Activated CD4-positive, alpha-beta memory T cell treated with anti-CD3 and anti-CD28 coated beads, Interleukin-2, amount 10 ng/mL, durations not matched to agents 7 days and 5 days (primary cell): ENCODE measurements at regions of chr5 and their contacts with region 1.

Region 1: DNA sequence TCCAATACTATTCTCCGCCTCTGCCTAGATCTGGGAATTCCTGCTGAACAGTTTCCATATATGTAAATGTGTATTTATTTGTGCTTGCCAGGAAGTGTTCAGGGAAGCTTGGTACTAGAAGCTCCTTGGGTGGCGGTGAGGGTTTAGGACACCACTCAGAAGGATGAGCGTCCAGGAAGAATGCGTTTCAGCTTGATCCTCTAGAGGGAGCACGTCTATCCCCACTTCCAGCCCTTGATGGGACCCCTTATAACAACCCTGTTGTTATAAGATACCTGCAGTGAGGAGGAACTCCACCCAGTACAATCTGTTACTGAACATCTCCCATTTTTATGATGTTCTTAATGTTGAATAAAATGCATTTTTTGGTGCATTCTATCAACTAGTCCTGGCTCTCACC is 88.9 kb downstream of the CYFIP2 start:
- DNase-seq: no peak
- H3K4me3 Mint-ChIP-seq: no peak overlapping the region
- H3K27ac Mint-ChIP-seq: no peak overlapping the region
- H3K4me1 Mint-ChIP-seq: peaks cover 26% of the 10 kb centered on the region
- H3K27me3 Mint-ChIP-seq: no peaks in the 10 kb centered on the region

Region 2: DNA sequence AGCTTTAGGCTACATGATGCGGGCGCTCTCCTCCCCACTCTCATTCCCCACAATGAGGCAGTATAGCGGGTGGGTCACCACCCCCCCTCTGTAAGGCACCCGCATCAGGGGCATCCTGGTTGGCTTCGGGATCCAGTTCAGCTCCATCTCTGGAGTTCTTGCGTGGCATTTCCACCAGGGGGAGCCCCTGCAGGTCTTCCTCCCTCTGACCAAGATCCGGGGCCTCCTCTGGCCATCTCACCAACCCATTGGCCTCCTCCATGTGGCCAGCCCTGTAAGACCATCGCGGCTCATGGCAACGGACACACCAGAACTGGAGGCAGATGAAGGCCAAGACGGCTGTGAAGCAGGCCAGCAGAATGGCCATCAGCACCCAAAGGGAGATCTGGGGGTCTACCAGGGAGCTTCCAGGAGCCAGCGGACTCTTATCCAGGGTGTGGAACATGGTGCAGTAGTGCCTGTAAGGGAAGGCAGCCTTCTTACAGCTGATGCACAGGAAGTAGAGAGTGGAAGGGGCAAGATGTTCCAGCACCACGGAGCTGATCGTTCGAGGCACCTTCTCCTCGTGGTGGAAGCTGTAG is 11.9 kb before region 1 on chr5:
- CTCF ChIA-PET with region 1: interaction called, 12 read pairs
- POLR2A ChIA-PET with region 1: interaction called, 3 read pairs
- DNase-seq: peak; percentile 34
- H3K4me3 Mint-ChIP-seq: no peak overlapping the region
- H3K27ac Mint-ChIP-seq: no peak overlapping the region
- H3K4me1 Mint-ChIP-seq: peaks cover 30% of the 10 kb centered on the region
- H3K27me3 Mint-ChIP-seq: no peaks in the 10 kb centered on the region

Region 3: GRCh38 chr5:157415838-157416237 is 61.0 kb after region 1 on chr5:
- CTCF ChIA-PET with region 1: no interaction called
- POLR2A ChIA-PET with region 1: no interaction called
- DNase-seq: no peak
- H3K4me3 Mint-ChIP-seq: no peak overlapping the region
- H3K27ac Mint-ChIP-seq: no peak overlapping the region
- H3K4me1 Mint-ChIP-seq: no peaks in the 10 kb centered on the region
- H3K27me3 Mint-ChIP-seq: peaks cover 33% of the 10 kb centered on the region